Psoas muscle (tissue), 8 donors: ENCODE measurements at regions of chr14 and their contacts with region 1.

Region 1: GRCh38 chr14:69129264-69129880 is 23.5 kb downstream of the DCAF5 start:
- DNase-seq: peak; percentile 59 to 78
- ATAC-seq: peak; percentile 79 to 87 (median 83)
- H3K4me3 ChIP-seq: no peak overlapping the region
- H3K27ac ChIP-seq: peak overlapping the region; percentile 64
- H3K4me1 ChIP-seq: peaks cover 56% of the 10 kb centered on the region
- H3K27me3 ChIP-seq: no peaks in the 10 kb centered on the region
- CTCF ChIP-seq: peak; percentile 92

Region 2: DNA sequence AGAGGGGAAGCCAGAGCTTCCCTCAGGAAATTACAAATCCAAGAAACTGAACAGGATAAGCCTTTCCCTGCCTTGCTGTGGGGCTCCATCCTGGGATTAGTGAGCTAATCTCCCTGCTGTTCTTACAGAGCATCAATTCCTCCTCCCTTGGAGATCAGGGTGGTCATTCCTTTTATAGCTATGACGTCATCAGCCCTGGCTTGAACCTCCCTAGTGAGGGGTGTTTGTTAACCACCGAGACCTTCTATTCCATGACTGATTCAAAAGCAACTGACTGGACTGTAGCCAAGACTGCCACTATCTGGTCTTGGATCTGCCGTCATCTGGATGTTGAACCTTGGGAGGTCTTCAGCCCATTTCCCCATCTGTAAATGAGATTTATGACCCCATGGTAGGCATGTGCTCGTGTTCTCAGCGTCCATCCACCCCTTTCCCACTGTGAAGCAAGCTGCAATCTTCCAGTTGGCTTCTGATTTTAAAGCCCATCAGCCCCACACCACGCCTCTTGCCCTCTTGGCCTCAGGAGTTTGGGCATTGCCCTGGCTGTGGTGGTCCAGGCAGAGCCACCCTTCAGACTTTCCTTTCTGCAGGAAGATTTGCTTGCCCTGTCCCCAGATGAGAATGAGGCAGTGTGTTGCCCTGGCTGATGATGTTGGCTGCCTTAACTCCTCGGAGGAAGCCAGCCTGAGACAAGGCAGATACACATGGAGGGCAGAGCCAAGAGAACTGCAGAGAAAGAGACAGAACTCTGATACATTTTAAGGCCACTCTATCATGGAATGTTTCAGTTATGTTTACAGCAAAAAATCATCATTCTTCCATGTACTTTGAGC is 90.7 kb before region 1 on chr14:
- intact Hi-C with region 1: no loop called
- DNase-seq: no peak
- ATAC-seq: peak in 2 of 4 donors; percentile 20 to 34
- H3K4me3 ChIP-seq: no peak overlapping the region
- H3K27ac ChIP-seq: peak overlapping the region; percentile 33
- H3K4me1 ChIP-seq: peaks cover 10% of the 10 kb centered on the region
- H3K27me3 ChIP-seq: peaks cover 0 to 5% (median 0%) of the 10 kb centered on the region in 3 donors
- CTCF ChIP-seq: no peak

Region 3: DNA sequence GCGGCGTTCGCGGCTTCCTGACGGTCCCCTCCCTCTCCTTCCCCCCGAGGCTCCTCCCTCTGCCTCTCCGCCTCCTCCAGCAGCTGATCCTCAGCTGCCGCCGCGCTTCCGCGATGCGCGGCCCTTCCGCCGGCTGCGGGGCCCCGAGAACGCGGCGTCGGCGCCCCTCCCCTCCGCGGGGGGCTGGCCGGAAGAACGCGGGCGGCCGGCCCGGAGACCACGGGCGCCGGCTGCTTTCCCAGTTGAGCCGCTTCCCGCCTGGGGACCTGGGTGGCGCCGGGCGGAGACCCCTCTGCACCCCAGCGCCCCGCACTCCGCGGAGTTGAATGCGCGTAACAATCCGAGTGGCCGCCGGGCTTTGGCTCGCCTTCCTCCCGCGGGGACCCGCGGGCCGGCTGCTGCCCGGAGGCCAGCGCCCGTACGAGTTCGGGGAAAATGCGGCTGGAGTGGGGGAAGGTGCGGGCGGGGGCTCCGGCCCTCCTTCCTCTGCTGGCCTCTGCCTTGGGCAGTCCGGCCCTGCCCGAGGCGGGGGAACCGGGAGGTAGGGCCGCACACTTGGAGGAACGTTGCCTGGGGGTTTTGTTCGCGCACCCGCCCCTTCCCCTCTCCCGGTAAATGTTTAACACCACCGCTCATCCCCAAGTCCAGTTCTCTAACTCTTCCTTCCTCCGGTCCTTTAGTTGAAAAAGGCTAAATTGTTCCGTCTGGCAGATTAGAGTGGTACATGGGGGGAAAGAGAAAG is 23.9 kb after region 1 on chr14:
- intact Hi-C with region 1: loop called in 1 of 2 experiments (anchors 1 kb)
- DNase-seq: peak; percentile 94 to 96
- ATAC-seq: peak; percentile 87 to 93 (median 92)
- H3K4me3 ChIP-seq: peak overlapping the region; percentile 98
- H3K27ac ChIP-seq: peak overlapping the region; percentile 97
- H3K4me1 ChIP-seq: peaks cover 23% of the 10 kb centered on the region
- H3K27me3 ChIP-seq: no peaks in the 10 kb centered on the region
- CTCF ChIP-seq: no peak

Region 4: DNA sequence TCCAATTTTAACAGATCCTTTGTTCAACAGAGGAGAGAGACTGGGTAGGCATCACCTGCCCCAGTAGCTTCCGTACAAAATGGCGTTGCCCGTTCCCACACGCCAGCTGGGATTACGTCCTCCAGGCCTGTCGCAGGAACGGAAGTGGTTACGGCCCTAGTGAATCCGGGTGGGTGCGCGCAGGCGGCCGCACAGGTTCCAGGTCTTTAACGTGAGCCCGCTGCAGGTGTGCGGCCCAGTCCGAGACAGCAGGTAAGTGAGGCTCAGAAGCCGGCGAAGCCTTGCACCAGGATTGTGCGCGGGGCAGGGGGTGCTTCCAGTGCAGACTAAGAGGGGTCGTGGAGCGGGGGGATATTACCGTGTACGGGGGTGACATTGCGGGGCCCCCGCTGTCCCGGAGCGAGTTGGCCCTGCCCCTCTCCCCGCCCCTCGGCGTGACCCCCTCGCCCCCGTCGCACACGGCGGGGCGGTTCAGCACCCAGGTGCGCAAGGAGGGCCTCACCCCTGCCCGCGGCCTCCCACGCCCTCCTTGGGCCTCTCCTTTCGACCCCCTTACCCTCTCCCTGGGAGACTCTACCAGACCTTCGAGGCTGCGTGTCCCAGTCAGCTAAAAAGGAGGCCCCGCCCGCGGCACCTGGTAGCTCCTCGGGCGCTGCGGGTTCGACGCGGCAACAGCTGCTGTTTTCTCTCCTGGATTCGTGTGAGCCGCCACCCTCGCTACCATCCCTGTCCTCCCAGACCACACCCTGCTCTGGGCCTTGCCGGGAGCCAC is 62.2 kb after region 1 on chr14 and contains the start of gene EXD2:
- intact Hi-C with region 1: loop called in 1 of 2 experiments (anchors 1 kb)
- DNase-seq: peak; percentile 87 to 93
- ATAC-seq: peak; percentile 99
- H3K4me3 ChIP-seq: peak within 1 kb of the TSS; percentile 90
- H3K27ac ChIP-seq: peak within 1 kb of the TSS; percentile 88
- H3K4me1 ChIP-seq: peaks cover 9% of the 10 kb centered on the region
- H3K27me3 ChIP-seq: no peaks in the 10 kb centered on the region
- CTCF ChIP-seq: no peak
- total RNA-seq, gene EXD2: 12.6 to 17.3 (median 13.6) TPM

Region 5: DNA sequence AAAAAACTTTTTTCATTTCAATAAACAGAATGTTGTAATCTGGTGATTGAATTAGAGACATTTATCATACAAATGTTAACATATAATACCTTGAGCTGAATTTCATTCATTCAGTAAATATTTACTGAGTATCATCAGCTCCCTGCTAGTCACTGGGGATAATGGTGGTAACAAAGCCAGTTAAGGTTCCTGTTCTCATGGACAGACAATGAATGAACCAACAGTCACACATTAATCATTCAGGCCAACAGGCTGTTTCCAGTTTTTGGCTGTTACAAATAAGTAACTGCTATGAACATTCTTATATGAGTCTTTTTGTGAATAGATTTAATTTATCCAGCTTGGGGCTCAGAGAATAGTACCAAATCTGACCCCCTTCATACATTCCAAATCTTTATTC is 75.4 kb after region 1 on chr14:
- intact Hi-C with region 1: loop called in 1 of 2 experiments (anchors 5 kb)
- DNase-seq: no peak
- ATAC-seq: peak in 1 of 4 donors; percentile 48
- H3K4me3 ChIP-seq: no peak overlapping the region
- H3K27ac ChIP-seq: no peak overlapping the region
- H3K4me1 ChIP-seq: peaks cover 5% of the 10 kb centered on the region
- H3K27me3 ChIP-seq: no peaks in the 10 kb centered on the region
- CTCF ChIP-seq: no peak

Region 6: GRCh38 chr14:69460093-69460701 is 330.8 kb after region 1 on chr14:
- intact Hi-C with region 1: loop called in 1 of 2 experiments (anchors 1 kb)
- DNase-seq: peak; percentile 63 to 67
- ATAC-seq: peak; percentile 91 to 98 (median 93)
- H3K4me3 ChIP-seq: no peak overlapping the region
- H3K27ac ChIP-seq: no peak overlapping the region
- H3K4me1 ChIP-seq: no peaks in the 10 kb centered on the region
- H3K27me3 ChIP-seq: no peaks in the 10 kb centered on the region
- CTCF ChIP-seq: peak; percentile 82